HCT116 (cell line): ENCODE measurements at regions of chr4 and their contacts with region 1.

Region 1: DNA sequence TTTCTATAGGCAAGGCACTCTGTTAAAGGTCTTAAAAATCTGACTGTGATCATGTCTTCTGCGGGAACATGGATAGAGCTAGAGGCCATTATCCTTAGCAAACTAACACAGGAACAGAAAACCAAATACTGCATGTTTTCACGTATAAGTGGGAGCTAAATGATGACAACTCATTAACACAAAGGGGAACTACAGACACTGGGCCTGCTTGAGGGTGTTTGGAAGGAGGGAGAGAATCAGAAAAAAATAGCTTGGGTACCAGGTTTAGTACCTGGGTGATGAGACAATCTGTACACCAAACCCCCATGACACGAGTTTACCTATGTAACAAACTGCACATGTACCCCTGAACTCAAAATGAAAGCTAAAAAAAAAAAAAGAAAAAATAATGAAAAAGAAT is 12.1 kb downstream of the SLC7A11 start:
- DNase-seq: no peak
- ATAC-seq: no peak
- H3K4me3 ChIP-seq: no peak overlapping the region
- H3K27ac ChIP-seq: no peak overlapping the region
- H3K4me1 ChIP-seq: peaks cover 0 to 8% of the 10 kb centered on the region in 2 experiments; a peak in 2 of 4 replicates
- H3K27me3 ChIP-seq: no peaks in the 10 kb centered on the region
- CTCF ChIP-seq: no peak
- POLR2A ChIP-seq: no peak
- RAD21 ChIP-seq: no peak

Region 2: GRCh38 chr4:136985683-136986082 is 1244.4 kb before region 1 on chr4:
- CTCF ChIA-PET with region 1: no interaction called
- POLR2A ChIA-PET with region 1: no interaction called
- RAD21 ChIA-PET with region 1: no interaction called
- intact Hi-C with region 1: no loop called
- DNase-seq: no peak
- ATAC-seq: no peak
- H3K4me3 ChIP-seq: no peak overlapping the region
- H3K27ac ChIP-seq: no peak overlapping the region
- H3K4me1 ChIP-seq: no peaks in the 10 kb centered on the region
- H3K27me3 ChIP-seq: no peaks in the 10 kb centered on the region
- CTCF ChIP-seq: no peak
- POLR2A ChIP-seq: no peak
- RAD21 ChIP-seq: no peak

Region 3: GRCh38 chr4:138242076-138242833 is 12.2 kb after region 1 on chr4 and contains the start of gene SLC7A11:
- CTCF ChIA-PET with region 1: no interaction called
- POLR2A ChIA-PET with region 1: interaction called, 11 read pairs
- RAD21 ChIA-PET with region 1: no interaction called
- intact Hi-C with region 1: no loop called
- DNase-seq: peak; percentile 96
- ATAC-seq: peak; percentile 89
- H3K4me3 ChIP-seq: peak within 1 kb of the TSS; percentile 64 to 71
- H3K27ac ChIP-seq: peak within 1 kb of the TSS; percentile 57
- H3K4me1 ChIP-seq: peaks cover 14 to 35% of the 10 kb centered on the region in 2 experiments
- H3K27me3 ChIP-seq: no peaks in the 10 kb centered on the region
- CTCF ChIP-seq: no peak
- POLR2A ChIP-seq: peak; percentile 47
- RAD21 ChIP-seq: no peak; the same call in 1 of the 2 replicates
- total RNA-seq, gene SLC7A11: 45.8 TPM